OCI-LY7 (cell line): ENCODE measurements at regions of chrX and their contacts with region 1.

Region 1: DNA sequence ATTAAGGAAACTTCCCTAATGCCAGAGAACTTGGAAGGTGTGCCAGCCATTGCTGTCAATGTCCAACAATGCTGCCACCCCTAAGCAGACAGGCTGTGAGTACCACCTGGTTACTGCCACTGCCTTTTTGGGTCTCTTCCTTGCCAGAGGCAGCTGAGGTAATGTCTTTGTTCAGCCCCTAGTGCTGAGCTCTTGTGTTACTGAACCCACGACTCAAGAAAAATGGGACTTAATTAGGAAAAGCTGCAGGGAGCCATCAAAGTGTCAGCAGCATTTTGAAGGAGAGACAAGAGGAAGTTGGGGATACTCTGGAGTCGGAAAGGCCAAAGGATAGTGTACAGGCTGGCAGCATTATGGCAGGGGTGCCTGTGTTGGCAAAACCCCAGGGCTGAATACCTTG is 283.7 kb downstream of the AFF2 start:
- DNase-seq: no peak
- H3K4me3 ChIP-seq: peak overlapping the region; percentile 61
- H3K27ac ChIP-seq: peak overlapping the region; percentile 70
- H3K4me1 ChIP-seq: peaks cover 40% of the 10 kb centered on the region
- CTCF ChIP-seq: no peak

Region 2: DNA sequence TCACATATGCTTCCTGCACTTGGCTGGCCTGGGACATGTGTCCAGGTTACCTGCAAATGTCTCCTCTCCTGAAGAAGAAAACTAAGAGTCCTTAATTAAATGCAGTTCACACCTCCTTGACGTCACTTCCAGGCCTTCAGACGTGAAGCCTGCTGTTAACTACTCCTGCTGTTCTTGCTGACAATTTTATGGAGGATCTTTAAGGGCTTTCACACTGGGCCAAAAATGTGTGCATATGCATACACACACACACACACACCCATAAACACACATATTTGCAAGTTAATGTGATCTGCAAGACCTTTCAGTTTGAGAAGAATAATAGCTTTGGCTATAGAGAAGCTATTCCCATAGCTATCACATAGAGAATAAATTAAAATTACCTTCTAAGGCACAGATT is 15.8 kb before region 1 on chrX:
- CTCF ChIA-PET with region 1: interaction called, 3 read pairs
- POLR2A ChIA-PET with region 1: interaction called, 11 read pairs
- intact Hi-C with region 1: no loop called
- DNase-seq: no peak
- H3K4me3 ChIP-seq: no peak overlapping the region
- H3K27ac ChIP-seq: no peak overlapping the region
- H3K4me1 ChIP-seq: peaks cover 21% of the 10 kb centered on the region
- CTCF ChIP-seq: no peak